ENCODE measurements at regions of chr5 and their contacts with region 1.

Region 1: DNA sequence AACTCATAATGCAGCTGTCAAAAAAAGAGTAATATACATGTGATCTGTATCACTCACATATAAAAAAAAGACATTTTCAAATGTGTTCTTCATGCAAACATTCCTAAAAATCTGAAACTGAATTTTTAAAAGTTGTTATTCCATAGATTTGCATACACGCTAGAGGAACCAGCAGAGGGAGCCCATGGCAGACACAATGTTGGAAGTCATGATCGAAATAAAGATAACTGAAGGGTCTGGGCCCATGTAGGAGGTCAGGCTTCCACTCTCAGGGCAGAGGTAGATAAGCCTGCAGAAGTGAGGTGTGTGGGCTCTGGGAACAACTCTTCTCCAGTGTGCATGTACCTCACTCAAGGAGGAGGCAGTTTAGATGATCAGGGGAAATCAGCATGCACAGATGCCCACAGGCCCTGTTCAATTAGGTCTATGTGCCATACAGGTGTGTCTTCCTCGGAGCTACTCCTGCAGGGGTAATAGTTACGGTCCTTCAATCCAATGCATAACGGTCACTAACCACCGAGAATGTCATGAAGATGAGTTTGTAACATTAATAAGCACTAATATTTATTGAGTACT is 208.6 kb downstream of the EPB41L4A start:
- DNase-seq: peak in 5 of 10 donors; percentile 18 to 66 (median 49)
- H3K4me3 ChIP-seq: no peak overlapping the region
- H3K27ac ChIP-seq: no peak overlapping the region
- H3K27me3 ChIP-seq: no peaks in the 10 kb centered on the region
- CTCF ChIP-seq: peak; percentile 29 to 81 (median 68)

Region 2: GRCh38 chr5:111781200-111781599 is 429.3 kb before region 1 on chr5:
- intact Hi-C with region 1: no loop called
- DNase-seq: peak in 7 of 10 donors; percentile 10 to 52 (median 36)
- H3K4me3 ChIP-seq: no peak overlapping the region
- H3K27ac ChIP-seq: no peak overlapping the region
- H3K27me3 ChIP-seq: no peaks in the 10 kb centered on the region
- CTCF ChIP-seq: no peak

Region 3: GRCh38 chr5:112529525-112529924 is 319.0 kb after region 1 on chr5:
- intact Hi-C with region 1: loop called in 1 of 2 experiments (anchors 10 kb)
- DNase-seq: no peak
- H3K4me3 ChIP-seq: no peak overlapping the region
- H3K27ac ChIP-seq: no peak overlapping the region
- H3K27me3 ChIP-seq: no peaks in the 10 kb centered on the region
- CTCF ChIP-seq: peak in 55 of 56 donors; percentile 14 to 73 (median 44)